Left cardiac atrium (tissue), 4 donors: ENCODE measurements at regions of chr17 and their contacts with region 1.

Region 1: DNA sequence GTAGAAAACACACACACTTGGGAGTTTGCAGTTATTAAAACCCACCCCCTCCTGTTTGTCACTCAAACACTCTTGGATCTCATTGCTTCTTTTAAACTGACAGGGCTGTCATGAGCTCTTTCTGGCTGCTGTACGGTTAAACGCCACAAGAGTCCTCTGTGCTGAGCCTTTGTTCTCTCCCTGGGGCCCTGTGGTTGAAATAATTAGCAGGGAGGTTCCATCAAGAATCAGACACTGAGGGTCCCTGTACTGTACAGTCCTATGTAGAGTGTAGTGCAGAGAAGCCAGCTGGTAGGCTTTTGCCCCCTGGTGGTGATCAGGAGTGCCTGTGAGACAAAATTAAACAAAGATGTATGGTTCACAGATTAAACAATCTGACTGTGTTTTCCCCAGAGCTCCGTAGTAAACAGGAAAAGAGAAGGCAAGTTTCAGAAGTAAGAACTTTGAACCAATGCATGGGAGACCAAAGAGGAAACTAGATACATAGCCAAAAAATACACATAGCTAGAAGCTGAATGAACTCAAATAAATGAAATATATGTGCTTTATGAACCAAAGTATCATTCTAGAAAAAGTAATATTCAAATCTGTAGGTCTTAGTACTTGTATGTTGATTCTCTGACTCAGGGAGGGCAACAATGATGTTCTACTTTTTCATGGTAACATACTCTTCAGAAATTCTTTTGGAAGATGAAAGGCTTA is 1.4 kb upstream of the SSH2 start:
- DNase-seq: peak; percentile 68
- ATAC-seq: peak; percentile 73 to 76

Region 2: GRCh38 chr17:29579866-29580771 is 351.3 kb before region 1 on chr17:
- intact Hi-C with region 1: loop called in 1 of 2 experiments (anchors 10 kb)
- DNase-seq: peak; percentile 89
- ATAC-seq: peak; percentile 69 to 82

Region 3: DNA sequence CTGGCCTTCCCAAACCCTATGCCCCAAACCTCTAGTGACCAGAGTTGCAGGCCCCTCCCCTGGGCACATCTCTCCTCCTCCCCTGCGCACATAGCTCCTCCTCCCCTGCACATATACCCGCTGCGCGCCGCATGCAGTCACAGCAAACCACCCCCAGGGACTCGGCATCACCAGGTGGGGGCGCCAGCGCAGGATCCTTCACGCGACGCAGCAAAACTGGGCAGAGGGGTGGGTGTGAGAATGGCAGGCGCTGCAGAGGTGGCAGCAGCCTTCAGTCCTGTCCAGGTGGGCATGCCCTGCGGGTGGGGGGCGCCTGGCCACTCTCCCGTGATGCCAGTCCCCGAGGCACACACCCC is 314.3 kb before region 1 on chr17:
- intact Hi-C with region 1: loop called in 1 of 2 experiments (anchors 10 kb)
- DNase-seq: peak; percentile 84
- ATAC-seq: peak; percentile 13 to 33